A549 (cell line): ENCODE measurements at regions of chr11 and their contacts with region 1.

Region 1: DNA sequence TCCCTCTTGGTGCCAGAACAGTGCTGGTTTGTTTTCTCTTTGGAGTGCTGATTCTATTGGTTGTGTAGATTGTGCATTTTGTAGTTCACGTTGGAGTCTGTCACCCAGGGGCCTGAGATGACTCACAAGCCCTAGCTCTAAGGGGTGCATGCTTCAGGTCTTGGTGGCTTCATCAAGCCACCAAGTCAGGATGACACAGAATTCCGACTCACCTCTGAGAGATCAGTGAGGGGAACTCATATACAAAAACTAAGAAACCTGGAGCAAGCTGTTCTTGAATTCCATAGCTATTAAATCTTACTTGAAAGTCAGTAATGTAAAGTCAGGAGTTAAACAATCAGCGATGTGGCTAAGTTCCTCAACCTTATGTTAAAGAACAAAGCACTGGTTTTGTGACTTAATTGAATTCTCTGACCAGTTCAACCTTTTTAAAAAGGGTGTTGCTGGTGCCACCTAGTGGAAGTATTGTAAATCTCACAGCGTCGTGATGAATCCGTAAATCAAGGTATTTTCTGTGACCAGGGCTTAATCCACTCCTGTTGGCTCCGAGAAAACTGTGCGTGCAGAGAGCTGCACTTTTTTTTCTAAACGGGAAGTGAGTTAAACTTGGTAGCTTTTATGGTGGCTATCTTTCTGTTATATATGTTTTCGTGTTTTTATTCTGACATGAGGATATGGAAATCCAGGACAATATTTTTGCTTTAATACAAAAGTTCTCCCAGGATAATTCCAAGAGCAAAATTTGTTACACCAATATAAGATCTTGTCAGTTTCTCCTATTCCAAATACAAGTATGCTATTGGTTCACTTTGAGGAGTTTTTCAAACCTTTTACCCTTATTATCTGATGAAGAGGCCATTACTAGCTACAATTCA is 14.6 kb downstream of the MMP13 start:
- DNase-seq: peak; percentile 54 to 59
- ATAC-seq: peak; percentile 68 to 87; a peak in 5 of 6 replicates
- H3K4me3 ChIP-seq: no peak overlapping the region
- H3K27ac ChIP-seq: no peak overlapping the region
- H3K4me1 ChIP-seq: no peaks in the 10 kb centered on the region
- CTCF ChIP-seq: peak; percentile 72
- EP300 ChIP-seq: no peak
- POLR2A ChIP-seq: no peak
- RAD21 ChIP-seq: peak; percentile 66 to 69

Region 2: GRCh38 chr11:102495161-102496042 is 445.5 kb before region 1 on chr11:
- CTCF ChIA-PET with region 1: no interaction called
- POLR2A ChIA-PET with region 1: no interaction called
- DNase-seq: peak; percentile 41 to 86
- ATAC-seq: peak; percentile 81 to 85
- H3K4me3 ChIP-seq: no peak overlapping the region
- H3K27ac ChIP-seq: peak overlapping the region; percentile 71 to 80
- H3K4me1 ChIP-seq: peaks cover 36% of the 10 kb centered on the region
- CTCF ChIP-seq: peak; percentile 69
- EP300 ChIP-seq: no peak
- POLR2A ChIP-seq: no peak
- RAD21 ChIP-seq: peak; percentile 83 to 91

Region 3: GRCh38 chr11:102733232-102733875 is 207.6 kb before region 1 on chr11:
- CTCF ChIA-PET with region 1: interaction called, 40 read pairs
- POLR2A ChIA-PET with region 1: no interaction called
- DNase-seq: peak; percentile 38 to 64
- ATAC-seq: peak; percentile 91 to 98
- H3K4me3 ChIP-seq: no peak overlapping the region
- H3K27ac ChIP-seq: no peak overlapping the region
- H3K4me1 ChIP-seq: no peaks in the 10 kb centered on the region
- CTCF ChIP-seq: peak; percentile 75
- EP300 ChIP-seq: no peak
- POLR2A ChIP-seq: no peak
- RAD21 ChIP-seq: peak; percentile 83 to 84

Region 4: DNA sequence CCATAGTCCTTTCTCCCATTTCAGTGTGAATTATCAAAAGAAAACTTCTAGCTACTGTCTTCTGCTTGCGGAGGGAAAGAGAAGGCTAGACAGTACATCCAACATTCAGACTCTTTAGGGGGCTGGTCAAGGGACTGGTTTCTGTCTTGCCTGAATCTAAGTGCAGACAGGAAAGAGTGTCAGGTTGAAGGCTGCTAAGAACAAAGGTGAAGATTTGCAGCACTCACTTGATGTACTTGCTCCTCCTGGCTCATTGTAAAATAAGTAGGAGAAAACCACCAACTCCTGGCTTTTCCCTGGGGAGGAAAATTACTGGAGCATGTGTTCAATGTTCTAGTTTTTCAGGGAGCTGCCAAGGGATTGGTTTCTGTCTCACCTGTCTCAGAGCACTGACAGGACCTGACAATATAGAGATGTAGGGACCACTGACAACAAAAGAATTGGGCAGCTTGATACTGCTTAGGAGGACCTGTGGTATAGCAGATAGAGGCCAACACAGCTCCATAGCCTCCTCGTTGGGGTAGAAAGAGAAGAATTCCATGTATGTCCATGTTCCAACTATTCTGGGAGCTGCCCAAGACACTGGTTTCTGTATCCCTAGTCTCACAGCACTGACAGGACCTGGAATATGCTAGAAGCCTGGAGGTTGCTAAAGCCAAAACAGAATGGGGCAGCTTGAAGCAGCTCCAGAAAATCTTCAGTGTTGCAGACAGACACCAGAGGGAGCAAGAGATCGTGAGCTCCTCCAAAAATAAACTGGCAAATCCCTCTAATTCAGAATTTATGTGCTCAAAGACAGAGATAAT is 26.5 kb before region 1 on chr11:
- CTCF ChIA-PET with region 1: interaction called, 11 read pairs
- POLR2A ChIA-PET with region 1: no interaction called
- DNase-seq: peak; percentile 18 to 23
- ATAC-seq: peak; percentile 62 to 73; a peak in 5 of 6 replicates
- H3K4me3 ChIP-seq: no peak overlapping the region
- H3K27ac ChIP-seq: no peak overlapping the region
- H3K4me1 ChIP-seq: no peaks in the 10 kb centered on the region
- CTCF ChIP-seq: peak; percentile 47
- EP300 ChIP-seq: no peak
- POLR2A ChIP-seq: no peak
- RAD21 ChIP-seq: peak; percentile 42 to 47; a peak in 3 of 5 replicates

Region 5: GRCh38 chr11:102929972-102930371 is 11.0 kb before region 1 on chr11:
- CTCF ChIA-PET with region 1: interaction called, 38 read pairs
- POLR2A ChIA-PET with region 1: no interaction called
- DNase-seq: no peak
- ATAC-seq: no peak
- H3K4me3 ChIP-seq: no peak overlapping the region
- H3K27ac ChIP-seq: no peak overlapping the region
- H3K4me1 ChIP-seq: no peaks in the 10 kb centered on the region
- CTCF ChIP-seq: no peak
- EP300 ChIP-seq: no peak
- POLR2A ChIP-seq: no peak
- RAD21 ChIP-seq: no peak

Region 6: DNA sequence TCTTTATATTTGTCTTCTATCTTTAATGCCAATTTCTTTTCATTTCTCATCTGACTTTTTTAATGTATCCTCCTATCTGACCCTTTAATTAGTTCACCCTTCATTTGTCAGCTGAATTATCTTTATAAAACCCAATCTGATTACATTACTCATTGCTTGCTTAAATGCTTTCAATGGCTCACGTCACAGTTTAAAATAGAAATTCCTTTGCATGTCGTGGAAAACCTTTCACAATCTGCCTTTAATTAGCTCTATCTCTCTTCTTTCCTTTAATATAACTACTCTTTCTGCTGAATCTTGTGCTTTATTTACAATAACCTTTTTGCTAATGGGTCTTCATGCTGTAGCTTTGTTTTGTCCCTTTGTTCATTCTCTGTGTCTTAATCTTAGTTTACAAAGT is 294.0 kb after region 1 on chr11:
- CTCF ChIA-PET with region 1: no interaction called
- POLR2A ChIA-PET with region 1: no interaction called
- DNase-seq: no peak
- ATAC-seq: no peak
- H3K4me3 ChIP-seq: no peak overlapping the region
- H3K27ac ChIP-seq: no peak overlapping the region
- H3K4me1 ChIP-seq: no peaks in the 10 kb centered on the region
- CTCF ChIP-seq: no peak
- EP300 ChIP-seq: no peak
- POLR2A ChIP-seq: no peak
- RAD21 ChIP-seq: no peak